Endothelial cell of umbilical vein (primary cell): ENCODE measurements at regions of chr6 and their contacts with region 1.

Region 1: GRCh38 chr6:37018198-37019064 is 13.0 kb downstream of the FGD2 start:
- DNase-seq: peak; percentile 85
- H3K4me3 ChIP-seq: no peak overlapping the region
- H3K27ac ChIP-seq: no peak overlapping the region
- H3K4me1 ChIP-seq: peaks cover 10% of the 10 kb centered on the region
- H3K27me3 ChIP-seq: no peaks in the 10 kb centered on the region
- CTCF ChIP-seq: peak; percentile 93 to 97
- POLR2A ChIP-seq: no peak

Region 2: DNA sequence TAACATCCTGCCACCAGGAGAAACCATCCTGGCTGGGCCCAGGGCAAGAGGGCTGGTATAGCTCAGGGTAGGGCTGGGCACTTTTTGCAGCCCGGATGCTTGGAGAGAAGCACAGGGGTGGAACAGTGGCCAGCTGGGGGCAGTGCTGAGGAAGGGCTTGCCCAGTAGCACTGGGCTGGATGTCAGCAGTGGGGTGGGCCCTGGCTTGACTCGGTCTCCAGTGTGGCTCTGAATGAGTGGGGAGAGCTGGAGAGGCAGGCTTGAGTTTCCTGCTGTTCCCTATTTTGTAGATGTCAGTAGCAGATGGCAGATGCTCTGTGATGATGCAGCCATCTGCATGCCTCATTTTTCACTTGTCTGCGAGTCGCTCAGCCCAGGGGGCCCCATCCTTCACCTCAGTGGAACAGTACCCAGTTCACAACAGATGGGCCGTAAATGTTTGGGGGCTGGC is 1449.4 kb before region 1 on chr6:
- CTCF ChIA-PET with region 1: no interaction called
- POLR2A ChIA-PET with region 1: no interaction called
- dilution Hi-C with region 1: no loop called
- intact Hi-C with region 1: no loop called
- DNase-seq: no peak
- H3K4me3 ChIP-seq: no peak overlapping the region
- H3K27ac ChIP-seq: no peak overlapping the region
- H3K4me1 ChIP-seq: no peaks in the 10 kb centered on the region
- H3K27me3 ChIP-seq: peaks cover 12% of the 10 kb centered on the region in 2 experiments
- CTCF ChIP-seq: peak; percentile 44 to 68
- POLR2A ChIP-seq: no peak

Region 3: DNA sequence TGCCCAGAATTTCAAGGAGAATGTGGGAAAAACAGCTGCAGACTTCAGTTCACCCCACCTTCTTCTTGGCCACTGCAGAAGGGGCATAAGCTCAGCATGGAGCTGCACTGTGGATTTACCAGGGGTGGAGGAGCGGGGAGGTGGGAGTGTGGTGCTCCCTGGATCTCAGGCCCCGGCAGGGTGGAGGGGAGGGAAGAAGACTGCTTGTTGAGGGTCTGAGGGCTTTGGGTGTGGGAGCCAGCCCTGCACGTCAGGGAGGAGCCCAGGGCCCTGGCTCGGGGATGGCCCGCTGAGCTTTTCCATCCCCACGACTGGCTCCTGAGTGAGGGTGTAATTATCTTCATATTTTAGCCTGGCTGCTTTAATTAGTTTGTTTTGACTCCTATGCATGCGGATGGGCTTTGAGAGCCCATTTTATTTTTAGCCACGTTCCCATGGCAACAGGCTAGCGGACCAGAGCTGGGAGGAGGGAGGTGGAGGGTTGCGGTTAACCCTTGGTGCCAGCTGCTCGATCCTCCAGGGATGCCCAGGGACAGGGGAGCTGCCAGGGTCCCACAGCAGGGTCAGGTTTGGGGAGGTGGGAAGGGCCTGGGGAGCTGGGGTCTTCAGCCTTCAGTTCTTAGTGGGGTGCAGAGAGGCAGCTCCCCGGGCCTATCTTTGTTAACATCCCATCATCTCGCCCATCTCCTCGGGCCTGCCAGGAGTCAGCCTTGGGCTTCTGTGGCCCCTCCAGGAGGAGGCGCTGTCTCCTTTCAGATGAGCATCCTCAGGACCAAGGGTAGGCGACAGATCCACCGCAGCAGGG is 252.6 kb before region 1 on chr6:
- CTCF ChIA-PET with region 1: interaction called, 130 read pairs
- POLR2A ChIA-PET with region 1: no interaction called
- dilution Hi-C with region 1: no loop called
- intact Hi-C with region 1: loop called (anchors 1 kb)
- DNase-seq: peak; percentile 65
- H3K4me3 ChIP-seq: no peak overlapping the region
- H3K27ac ChIP-seq: no peak overlapping the region
- H3K4me1 ChIP-seq: peaks cover 15% of the 10 kb centered on the region
- H3K27me3 ChIP-seq: no peaks in the 10 kb centered on the region
- CTCF ChIP-seq: peak; percentile 90 to 96
- POLR2A ChIP-seq: no peak

Region 4: DNA sequence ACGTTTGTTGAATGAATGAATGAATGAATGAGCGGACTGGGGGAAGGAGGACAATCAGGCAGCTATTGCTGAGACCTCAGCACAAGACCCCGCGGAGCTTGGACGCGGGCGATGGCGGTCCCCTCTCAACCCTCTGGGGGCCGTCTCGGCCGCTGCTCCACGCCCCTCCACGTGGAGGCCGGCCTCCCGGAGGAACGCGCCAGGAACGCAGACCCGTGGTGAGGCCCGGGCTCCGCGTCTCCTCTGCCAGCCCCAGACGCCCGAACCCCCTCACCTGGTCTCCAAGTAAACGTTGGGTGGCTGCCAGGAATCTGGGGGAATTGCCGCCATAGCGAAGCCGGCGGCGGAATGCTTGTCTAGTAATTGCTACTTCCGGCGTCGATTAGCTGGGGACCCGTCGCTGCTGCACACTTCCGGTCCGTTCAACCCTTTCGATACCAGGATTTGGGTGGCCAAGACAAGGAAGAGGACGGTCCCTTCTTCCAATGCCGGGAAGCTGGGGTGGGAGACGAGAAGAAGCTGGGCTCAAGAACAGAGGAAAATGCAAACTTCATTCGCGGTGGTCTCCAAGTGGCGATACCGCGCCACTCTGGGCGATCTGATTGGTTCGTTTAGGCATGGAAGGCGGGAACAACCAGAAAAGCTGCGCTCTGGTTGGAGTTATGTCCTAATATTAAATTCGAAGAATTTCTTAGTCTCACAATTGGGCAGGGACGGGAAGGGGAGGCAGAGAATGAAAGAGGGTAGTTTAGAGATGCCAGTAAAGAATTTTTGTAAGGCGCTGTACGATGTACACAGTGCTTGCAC is 143.8 kb before region 1 on chr6 and contains the start of gene PPIL1:
- CTCF ChIA-PET with region 1: interaction called, 36 read pairs
- POLR2A ChIA-PET with region 1: no interaction called
- dilution Hi-C with region 1: no loop called
- intact Hi-C with region 1: no loop called
- DNase-seq: peak; percentile 93
- H3K4me3 ChIP-seq: peak within 1 kb of the TSS; percentile 63 to 95 (median 67)
- H3K27ac ChIP-seq: peak within 1 kb of the TSS; percentile 82
- H3K4me1 ChIP-seq: peaks cover 12% of the 10 kb centered on the region
- H3K27me3 ChIP-seq: no peaks in the 10 kb centered on the region
- CTCF ChIP-seq: peak in 1 of 2 donors; percentile 2
- POLR2A ChIP-seq: peak; percentile 59
- total RNA-seq, gene PPIL1: 33.8 and 35.6 TPM in 2 replicates

Region 5: GRCh38 chr6:36912586-36912985 is 105.8 kb before region 1 on chr6:
- CTCF ChIA-PET with region 1: interaction called, 46 read pairs
- POLR2A ChIA-PET with region 1: no interaction called
- dilution Hi-C with region 1: no loop called
- intact Hi-C with region 1: loop called (anchors 1 kb)
- DNase-seq: no peak
- H3K4me3 ChIP-seq: no peak overlapping the region
- H3K27ac ChIP-seq: no peak overlapping the region
- H3K4me1 ChIP-seq: peaks cover 8% of the 10 kb centered on the region
- H3K27me3 ChIP-seq: no peaks in the 10 kb centered on the region
- CTCF ChIP-seq: no peak
- POLR2A ChIP-seq: no peak

Region 6: GRCh38 chr6:37005061-37005810 is 13.2 kb before region 1 on chr6 and contains the start of gene FGD2:
- CTCF ChIA-PET with region 1: interaction called, 33 read pairs
- POLR2A ChIA-PET with region 1: no interaction called
- dilution Hi-C with region 1: no loop called
- intact Hi-C with region 1: no loop called
- DNase-seq: no peak
- H3K4me3 ChIP-seq: no peak within 1 kb of the TSS
- H3K27ac ChIP-seq: no peak within 1 kb of the TSS
- H3K4me1 ChIP-seq: no peaks in the 10 kb centered on the region
- H3K27me3 ChIP-seq: peaks cover 0 to 6% of the 10 kb centered on the region in 2 experiments
- CTCF ChIP-seq: no peak
- POLR2A ChIP-seq: no peak
- total RNA-seq, gene FGD2: not detected in 2 replicates

Region 7: GRCh38 chr6:37207903-37208456 is 189.5 kb after region 1 on chr6:
- CTCF ChIA-PET with region 1: interaction called, 330 read pairs
- POLR2A ChIA-PET with region 1: no interaction called
- dilution Hi-C with region 1: no loop called
- intact Hi-C with region 1: loop called (anchors 1 kb)
- DNase-seq: peak; percentile 83
- H3K4me3 ChIP-seq: no peak overlapping the region
- H3K27ac ChIP-seq: no peak overlapping the region
- H3K4me1 ChIP-seq: peaks cover 3% of the 10 kb centered on the region
- H3K27me3 ChIP-seq: peaks cover 20 to 25% of the 10 kb centered on the region in 2 experiments
- CTCF ChIP-seq: peak; percentile 72 to 84
- POLR2A ChIP-seq: no peak